ENCODE measurements at regions of chr6 and their contacts with region 1.

Region 1: GRCh38 chr6:158026054-158026900 is 44.6 kb downstream of the SYNJ2 start:
- DNase-seq: peak; percentile 52 to 92 (median 74)
- ATAC-seq: peak; percentile 75
- H3K4me3 ChIP-seq: peak overlapping the region; percentile 42
- H3K4me3 Mint-ChIP-seq: peak overlapping the region; percentile 86
- H3K27ac ChIP-seq: peak overlapping the region; percentile 77 to 88
- H3K27ac Mint-ChIP-seq: peak overlapping the region; percentile 92
- H3K4me1 ChIP-seq: peaks cover 42% of the 10 kb centered on the region
- H3K4me1 Mint-ChIP-seq: peaks cover 42% of the 10 kb centered on the region
- H3K27me3 ChIP-seq: no peaks in the 10 kb centered on the region
- H3K27me3 Mint-ChIP-seq: no peaks in the 10 kb centered on the region
- CTCF ChIP-seq: peak; percentile 85

Region 2: DNA sequence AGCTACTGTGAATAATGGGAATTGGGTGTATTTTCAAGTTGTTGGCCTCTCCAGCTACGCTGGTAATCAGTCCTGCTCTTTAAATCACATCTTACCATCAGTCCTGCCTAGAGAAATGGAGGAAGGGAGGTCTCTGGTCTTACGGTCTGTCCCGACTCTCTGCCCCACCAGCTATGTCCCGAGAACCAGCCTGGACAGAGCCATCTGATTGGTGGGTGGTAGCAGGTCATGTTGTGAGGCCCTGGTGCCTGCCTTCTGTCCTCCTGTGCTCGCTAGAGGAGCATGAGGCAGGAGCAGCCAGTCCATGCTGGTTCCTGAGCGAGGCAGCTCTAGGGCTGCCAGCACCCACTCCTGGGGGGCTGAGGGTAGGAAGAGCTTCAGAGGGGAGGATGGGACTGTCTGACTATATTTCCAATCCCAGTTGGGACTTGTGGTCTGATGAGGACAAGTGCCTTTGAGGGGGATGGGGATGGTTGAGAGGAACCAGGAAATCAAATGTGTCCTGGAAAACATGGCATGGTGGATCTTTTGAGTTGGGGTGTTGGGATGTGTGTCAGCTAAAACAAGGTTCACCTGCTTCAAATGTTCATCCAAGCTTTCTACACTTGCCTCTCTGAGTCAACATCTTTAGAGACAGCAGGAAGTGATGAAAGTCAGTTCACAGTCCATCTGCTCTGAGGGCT is 11.6 kb before region 1 on chr6:
- CTCF ChIA-PET with region 1: interaction called, 14 read pairs
- POLR2A ChIA-PET with region 1: interaction called, 4 read pairs
- intact Hi-C with region 1: no loop called
- DNase-seq: no peak
- ATAC-seq: no peak
- H3K4me3 ChIP-seq: no peak overlapping the region
- H3K4me3 Mint-ChIP-seq: no peak overlapping the region
- H3K27ac ChIP-seq: no peak overlapping the region
- H3K27ac Mint-ChIP-seq: peak overlapping the region; percentile 42
- H3K4me1 ChIP-seq: peaks cover 38% of the 10 kb centered on the region
- H3K4me1 Mint-ChIP-seq: peaks cover 57% of the 10 kb centered on the region
- H3K27me3 ChIP-seq: no peaks in the 10 kb centered on the region
- H3K27me3 Mint-ChIP-seq: no peaks in the 10 kb centered on the region
- CTCF ChIP-seq: no peak

Region 3: GRCh38 chr6:158072083-158072721 is 45.9 kb after region 1 on chr6:
- CTCF ChIA-PET with region 1: interaction called, 13 read pairs
- POLR2A ChIA-PET with region 1: interaction called, 9 read pairs
- intact Hi-C with region 1: loop called (anchors 2 to 5 kb)
- DNase-seq: peak; percentile 44 to 81 (median 62)
- ATAC-seq: peak; percentile 67
- H3K4me3 ChIP-seq: no peak overlapping the region
- H3K4me3 Mint-ChIP-seq: no peak overlapping the region
- H3K27ac ChIP-seq: no peak overlapping the region
- H3K27ac Mint-ChIP-seq: no peak overlapping the region
- H3K4me1 ChIP-seq: peaks cover 17% of the 10 kb centered on the region
- H3K4me1 Mint-ChIP-seq: peaks cover 6% of the 10 kb centered on the region
- H3K27me3 ChIP-seq: no peaks in the 10 kb centered on the region
- H3K27me3 Mint-ChIP-seq: no peaks in the 10 kb centered on the region
- CTCF ChIP-seq: peak; percentile 80